Endothelial cell of umbilical vein (primary cell): ENCODE measurements at regions of chr2 and their contacts with region 1.

Region 1: GRCh38 chr2:223727562-223727961 is 109.8 kb downstream of the AP1S3 start:
- DNase-seq: peak; percentile 60
- H3K4me3 ChIP-seq: no peak overlapping the region
- H3K27ac ChIP-seq: peak overlapping the region; percentile 14
- H3K4me1 ChIP-seq: peaks cover 30% of the 10 kb centered on the region
- H3K27me3 ChIP-seq: no peaks in the 10 kb centered on the region
- CTCF ChIP-seq: peak; percentile 38 to 48
- POLR2A ChIP-seq: no peak

Region 2: DNA sequence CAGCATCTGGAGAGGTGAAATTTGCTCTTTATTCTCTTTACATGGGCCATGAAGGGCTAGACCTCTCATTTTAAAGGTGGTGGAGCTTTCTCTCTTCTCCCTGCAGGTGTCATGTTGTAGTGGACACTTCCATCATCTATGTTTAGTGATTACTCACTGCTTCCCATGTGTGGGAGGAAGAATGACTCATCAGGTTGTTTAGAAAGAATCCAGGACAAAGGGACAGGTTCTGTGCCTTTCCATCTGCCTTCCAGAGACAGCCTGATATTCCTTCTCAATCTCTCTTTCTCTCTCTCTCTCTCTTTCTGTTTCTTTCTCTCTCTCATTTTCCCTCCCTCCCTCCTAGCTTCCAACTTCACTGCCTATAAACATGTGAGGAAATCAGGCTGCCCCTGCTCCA is 164.1 kb before region 1 on chr2:
- CTCF ChIA-PET with region 1: no interaction called
- POLR2A ChIA-PET with region 1: no interaction called
- dilution Hi-C with region 1: no loop called
- intact Hi-C with region 1: loop called (anchors 5 kb)
- DNase-seq: peak; percentile 73
- H3K4me3 ChIP-seq: no peak overlapping the region
- H3K27ac ChIP-seq: peak overlapping the region; percentile 23
- H3K4me1 ChIP-seq: peaks cover 8% of the 10 kb centered on the region
- H3K27me3 ChIP-seq: peaks cover 0 to 2% of the 10 kb centered on the region in 2 experiments
- CTCF ChIP-seq: no peak
- POLR2A ChIP-seq: no peak

Region 3: DNA sequence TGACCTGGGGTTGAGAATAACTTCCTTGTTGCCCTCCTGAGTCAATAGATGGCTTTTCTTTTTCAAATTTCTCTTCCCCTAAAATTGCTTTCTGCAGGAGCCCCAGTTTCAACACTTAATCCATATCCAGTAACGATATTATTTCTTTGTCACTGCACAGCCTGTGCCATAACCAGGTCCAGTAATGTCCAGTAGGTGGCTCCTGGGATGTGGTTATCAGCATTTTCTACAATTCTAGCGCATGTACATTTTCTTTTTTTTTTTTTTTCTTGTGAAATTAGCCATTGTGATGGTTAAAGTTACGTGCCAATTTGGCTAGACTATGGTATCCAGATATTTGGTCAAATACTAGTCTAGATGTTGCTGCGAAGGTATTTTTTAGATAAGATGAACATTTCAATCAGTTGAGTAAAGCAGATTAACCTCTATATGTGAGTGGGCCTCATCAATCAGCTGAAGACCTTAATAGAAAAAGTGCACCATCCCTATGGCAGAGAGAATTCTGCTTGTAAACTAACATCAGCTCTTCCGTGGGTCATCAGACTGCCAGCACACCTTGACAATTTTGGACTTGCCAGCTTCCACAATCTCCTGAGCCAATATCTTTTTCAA is 52.5 kb before region 1 on chr2:
- CTCF ChIA-PET with region 1: interaction called, 6 read pairs
- POLR2A ChIA-PET with region 1: no interaction called
- dilution Hi-C with region 1: no loop called
- intact Hi-C with region 1: loop called (anchors 1 kb)
- DNase-seq: peak; percentile 69
- H3K4me3 ChIP-seq: no peak overlapping the region
- H3K27ac ChIP-seq: no peak overlapping the region
- H3K4me1 ChIP-seq: no peaks in the 10 kb centered on the region
- H3K27me3 ChIP-seq: no peaks in the 10 kb centered on the region
- CTCF ChIP-seq: peak; percentile 60 to 69
- POLR2A ChIP-seq: no peak

Region 4: GRCh38 chr2:223760838-223761502 is 33.4 kb after region 1 on chr2:
- CTCF ChIA-PET with region 1: interaction called, 4 read pairs
- POLR2A ChIA-PET with region 1: no interaction called
- dilution Hi-C with region 1: no loop called
- intact Hi-C with region 1: loop called (anchors 1 kb)
- DNase-seq: peak; percentile 84
- H3K4me3 ChIP-seq: no peak overlapping the region
- H3K27ac ChIP-seq: peak overlapping the region; percentile 66
- H3K4me1 ChIP-seq: peaks cover 39% of the 10 kb centered on the region
- H3K27me3 ChIP-seq: no peaks in the 10 kb centered on the region
- CTCF ChIP-seq: no peak
- POLR2A ChIP-seq: no peak

Region 5: DNA sequence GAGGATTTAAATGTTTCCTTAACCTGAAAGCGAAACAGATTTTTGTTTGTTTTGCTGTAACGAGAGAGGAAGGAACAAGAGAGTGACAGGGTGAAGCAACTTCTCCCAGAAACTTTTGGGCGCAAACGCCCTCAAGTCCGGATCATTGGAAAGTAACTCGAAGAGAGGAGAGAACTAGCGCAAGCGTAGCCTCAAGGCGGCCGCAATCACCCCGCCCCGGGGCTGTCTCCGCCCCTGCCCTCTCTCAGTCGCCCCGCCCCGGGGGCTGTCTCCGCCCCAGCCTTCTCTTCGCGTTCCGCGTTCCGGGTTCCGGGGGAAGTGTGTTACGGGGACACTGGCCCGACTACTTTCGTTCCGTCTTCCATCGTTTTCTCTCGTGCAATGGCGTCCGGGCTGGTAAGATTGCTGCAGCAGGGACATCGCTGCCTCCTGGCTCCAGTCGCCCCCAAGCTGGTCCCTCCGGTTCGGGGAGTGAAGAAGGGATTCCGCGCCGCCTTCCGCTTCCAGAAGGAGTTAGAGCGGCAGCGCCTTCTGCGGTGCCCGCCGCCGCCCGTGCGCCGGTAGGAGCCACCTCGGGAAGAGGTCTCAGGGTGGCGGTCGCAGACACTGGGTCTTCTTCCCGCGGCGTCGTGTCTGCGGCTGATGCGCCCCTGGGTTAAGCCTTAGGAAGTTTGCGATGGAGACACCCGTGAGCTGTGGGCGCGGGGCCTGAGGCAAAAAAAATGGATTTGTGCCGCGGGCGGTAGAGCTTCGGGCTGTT is 229.7 kb after region 1 on chr2 and contains the start of gene MRPL44:
- CTCF ChIA-PET with region 1: no interaction called
- POLR2A ChIA-PET with region 1: no interaction called
- dilution Hi-C with region 1: no loop called
- intact Hi-C with region 1: loop called (anchors 10 kb)
- DNase-seq: peak; percentile 95
- H3K4me3 ChIP-seq: peak within 1 kb of the TSS; percentile 89 to 99 (median 95)
- H3K27ac ChIP-seq: peak within 1 kb of the TSS; percentile 58
- H3K4me1 ChIP-seq: peaks cover 38% of the 10 kb centered on the region
- H3K27me3 ChIP-seq: no peaks in the 10 kb centered on the region
- CTCF ChIP-seq: no peak
- POLR2A ChIP-seq: peak; percentile 90
- total RNA-seq, gene MRPL44: 27.7 and 31.5 TPM in 2 replicates